Pancreas (tissue), 10 donors: ENCODE measurements at regions of chr2 and their contacts with region 1.

Region 1: GRCh38 chr2:120680136-120680761 is 55.4 kb upstream of the GLI2 start:
- DNase-seq: peak; percentile 70 to 88 (median 84)
- ATAC-seq: peak; percentile 80 to 90 (median 88)
- H3K4me3 ChIP-seq: no peak overlapping the region
- H3K27ac ChIP-seq: no peak overlapping the region
- H3K4me1 ChIP-seq: no peaks in the 10 kb centered on the region
- H3K27me3 ChIP-seq: no peaks in the 10 kb centered on the region
- CTCF ChIP-seq: peak; percentile 19 to 46 (median 30)

Region 2: GRCh38 chr2:120312861-120313694 is 367.2 kb before region 1 on chr2:
- intact Hi-C with region 1: loop called in 1 of 3 experiments (anchors 10 kb)
- DNase-seq: peak; percentile 78 to 92 (median 86)
- ATAC-seq: peak; percentile 91 to 96 (median 94)
- H3K4me3 ChIP-seq: peak overlapping the region in 2 of 4 donors; percentile 36 to 43
- H3K27ac ChIP-seq: peak overlapping the region in 3 of 4 donors; percentile 8 to 31 (median 31)
- H3K4me1 ChIP-seq: peaks cover 3 to 7% (median 5%) of the 10 kb centered on the region in 3 donors
- H3K27me3 ChIP-seq: no peaks in the 10 kb centered on the region
- CTCF ChIP-seq: peak; percentile 75 to 86 (median 80)

Region 3: DNA sequence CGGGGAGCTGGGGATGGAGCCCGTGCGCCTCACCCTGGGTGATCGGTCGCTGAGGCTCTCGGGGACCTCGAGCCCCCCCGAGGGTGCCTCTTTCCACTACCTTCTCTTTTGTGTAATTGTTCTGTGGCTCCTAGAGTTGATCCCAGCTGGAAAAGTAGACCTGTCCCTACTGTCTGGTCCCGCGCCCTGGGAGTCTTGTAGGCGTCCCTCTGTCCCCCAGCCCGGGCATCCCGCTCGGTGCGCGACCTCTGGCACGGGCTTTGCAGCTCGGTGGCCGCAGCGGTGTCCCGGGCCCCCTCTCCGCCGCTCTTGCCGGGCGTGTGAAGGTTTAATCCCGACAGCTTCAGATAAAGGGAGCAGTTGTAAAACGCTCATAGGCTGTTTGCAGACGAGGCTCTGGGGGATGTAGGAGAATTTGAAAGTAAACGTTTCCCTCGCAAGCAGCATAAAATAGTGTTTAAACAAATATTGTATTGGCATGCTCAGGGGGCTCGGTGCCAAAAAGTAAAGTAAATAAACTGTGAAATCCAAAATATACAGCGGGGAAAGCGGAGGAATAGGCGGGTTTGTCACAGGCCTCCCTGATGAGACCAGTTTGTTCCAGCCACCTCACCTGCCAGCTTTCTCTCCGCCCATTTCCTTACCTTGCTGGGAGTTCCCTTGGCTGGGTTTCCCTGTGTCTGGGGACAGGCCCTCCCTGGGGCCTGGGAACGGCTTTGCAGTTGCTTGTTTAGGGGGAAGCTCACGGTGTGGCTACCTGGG is 57.3 kb after region 1 on chr2:
- intact Hi-C with region 1: no loop called
- DNase-seq: peak in 3 of 6 donors; percentile 34 to 71 (median 55)
- ATAC-seq: peak in 3 of 4 donors; percentile 64 to 80 (median 64)
- H3K4me3 ChIP-seq: peak overlapping the region in 2 of 4 donors; percentile 13 to 47
- H3K27ac ChIP-seq: no peak overlapping the region
- H3K4me1 ChIP-seq: peaks cover 0 to 6% (median 4%) of the 10 kb centered on the region in 3 donors
- H3K27me3 ChIP-seq: peaks cover 0 to 35% (median 10%) of the 10 kb centered on the region in 4 donors
- CTCF ChIP-seq: no peak